ENCODE measurements at regions of chr2 and their contacts with region 1.

Region 1: GRCh38 chr2:23404426-23404825 is 19.4 kb downstream of the KLHL29 start:
- DNase-seq: peak; percentile 80
- H3K4me3 ChIP-seq: no peak overlapping the region
- H3K27ac ChIP-seq: no peak overlapping the region
- H3K4me1 ChIP-seq: peaks cover 12% of the 10 kb centered on the region
- H3K27me3 ChIP-seq: no peaks in the 10 kb centered on the region
- CTCF ChIP-seq: peak in 1 of 2 donors; percentile 25
- POLR2A ChIP-seq: no peak

Region 2: GRCh38 chr2:23211987-23212583 is 192.3 kb before region 1 on chr2:
- CTCF ChIA-PET with region 1: no interaction called
- POLR2A ChIA-PET with region 1: no interaction called
- dilution Hi-C with region 1: no loop called
- intact Hi-C with region 1: no loop called
- DNase-seq: no peak
- H3K4me3 ChIP-seq: no peak overlapping the region
- H3K27ac ChIP-seq: no peak overlapping the region
- H3K4me1 ChIP-seq: no peaks in the 10 kb centered on the region
- H3K27me3 ChIP-seq: no peaks in the 10 kb centered on the region
- CTCF ChIP-seq: no peak
- POLR2A ChIP-seq: no peak

Region 3: DNA sequence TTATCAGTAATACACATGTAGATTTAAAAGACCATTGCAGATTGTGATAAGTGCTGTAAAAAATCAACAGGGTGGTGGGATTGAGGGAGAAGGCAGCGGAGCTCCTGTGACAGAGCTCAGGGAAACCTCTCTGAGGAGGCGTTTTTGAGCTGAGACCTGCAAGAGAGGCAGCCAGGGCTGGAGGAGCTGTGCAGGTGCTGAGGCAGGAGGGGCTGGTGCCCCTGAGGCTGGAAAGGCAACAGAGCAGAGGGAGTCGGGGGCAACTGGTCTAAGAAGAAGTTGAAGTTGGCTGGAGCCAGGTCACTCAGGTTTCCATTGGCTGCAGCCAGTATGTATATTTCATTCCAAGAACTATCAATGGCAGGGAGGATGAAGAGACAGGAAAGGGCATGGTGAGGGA is 28.1 kb after region 1 on chr2:
- CTCF ChIA-PET with region 1: no interaction called
- POLR2A ChIA-PET with region 1: no interaction called
- dilution Hi-C with region 1: no loop called
- intact Hi-C with region 1: no loop called
- DNase-seq: no peak
- H3K4me3 ChIP-seq: no peak overlapping the region
- H3K27ac ChIP-seq: no peak overlapping the region
- H3K4me1 ChIP-seq: no peaks in the 10 kb centered on the region
- H3K27me3 ChIP-seq: no peaks in the 10 kb centered on the region
- CTCF ChIP-seq: no peak
- POLR2A ChIP-seq: no peak

Region 4: DNA sequence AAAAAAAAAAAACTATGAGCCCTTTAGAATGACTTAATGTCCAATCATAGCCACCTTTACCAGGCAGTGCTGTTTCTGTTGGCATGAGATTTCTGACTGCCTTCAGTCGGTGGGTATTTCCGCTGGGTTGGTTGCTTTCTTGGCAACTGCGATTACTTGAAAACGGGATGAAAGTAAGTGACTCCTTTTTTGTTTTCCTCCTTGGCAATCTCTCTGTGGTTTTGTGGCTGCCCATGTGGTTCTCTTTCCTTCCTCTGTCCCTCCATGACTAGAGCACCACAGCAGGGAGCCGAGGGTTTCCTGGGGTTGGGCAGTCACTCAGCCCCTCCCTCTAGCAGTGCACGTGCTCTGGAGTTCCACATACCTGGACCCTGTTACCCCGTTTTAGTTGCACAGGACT is 92.6 kb after region 1 on chr2:
- CTCF ChIA-PET with region 1: interaction called, 3 read pairs
- POLR2A ChIA-PET with region 1: no interaction called
- dilution Hi-C with region 1: no loop called
- intact Hi-C with region 1: loop called (anchors 5 kb)
- DNase-seq: peak; percentile 75
- H3K4me3 ChIP-seq: no peak overlapping the region
- H3K27ac ChIP-seq: no peak overlapping the region
- H3K4me1 ChIP-seq: peaks cover 14% of the 10 kb centered on the region
- H3K27me3 ChIP-seq: no peaks in the 10 kb centered on the region
- CTCF ChIP-seq: no peak
- POLR2A ChIP-seq: no peak

Region 5: GRCh38 chr2:23566236-23567142 is 162.1 kb after region 1 on chr2:
- CTCF ChIA-PET with region 1: interaction called, 18 read pairs
- POLR2A ChIA-PET with region 1: no interaction called
- dilution Hi-C with region 1: no loop called
- intact Hi-C with region 1: loop called (anchors 5 kb)
- DNase-seq: peak; percentile 30
- H3K4me3 ChIP-seq: no peak overlapping the region
- H3K27ac ChIP-seq: no peak overlapping the region
- H3K4me1 ChIP-seq: no peaks in the 10 kb centered on the region
- H3K27me3 ChIP-seq: no peaks in the 10 kb centered on the region
- CTCF ChIP-seq: peak; percentile 51 to 55
- POLR2A ChIP-seq: no peak

Region 6: GRCh38 chr2:23574919-23575654 is 170.7 kb after region 1 on chr2:
- CTCF ChIA-PET with region 1: interaction called, 5 read pairs
- POLR2A ChIA-PET with region 1: no interaction called
- dilution Hi-C with region 1: no loop called
- intact Hi-C with region 1: loop called (anchors 5 kb)
- DNase-seq: no peak
- H3K4me3 ChIP-seq: no peak overlapping the region
- H3K27ac ChIP-seq: no peak overlapping the region
- H3K4me1 ChIP-seq: no peaks in the 10 kb centered on the region
- H3K27me3 ChIP-seq: no peaks in the 10 kb centered on the region
- CTCF ChIP-seq: no peak
- POLR2A ChIP-seq: no peak